IMR-90 (cell line): ENCODE measurements at regions of chr9 and their contacts with region 1.

Region 1: GRCh38 chr9:74645007-74645639 is 148.0 kb downstream of the RORB start:
- DNase-seq: no peak
- ATAC-seq: peak; percentile 53; the same call in 1 of the 2 replicates
- H3K4me3 ChIP-seq: no peak overlapping the region
- H3K27ac ChIP-seq: no peak overlapping the region
- H3K4me1 ChIP-seq: no peaks in the 10 kb centered on the region
- H3K27me3 ChIP-seq: no peaks in the 10 kb centered on the region
- CTCF ChIP-seq: peak; percentile 45
- POLR2A ChIP-seq: no peak
- RAD21 ChIP-seq: no peak

Region 2: DNA sequence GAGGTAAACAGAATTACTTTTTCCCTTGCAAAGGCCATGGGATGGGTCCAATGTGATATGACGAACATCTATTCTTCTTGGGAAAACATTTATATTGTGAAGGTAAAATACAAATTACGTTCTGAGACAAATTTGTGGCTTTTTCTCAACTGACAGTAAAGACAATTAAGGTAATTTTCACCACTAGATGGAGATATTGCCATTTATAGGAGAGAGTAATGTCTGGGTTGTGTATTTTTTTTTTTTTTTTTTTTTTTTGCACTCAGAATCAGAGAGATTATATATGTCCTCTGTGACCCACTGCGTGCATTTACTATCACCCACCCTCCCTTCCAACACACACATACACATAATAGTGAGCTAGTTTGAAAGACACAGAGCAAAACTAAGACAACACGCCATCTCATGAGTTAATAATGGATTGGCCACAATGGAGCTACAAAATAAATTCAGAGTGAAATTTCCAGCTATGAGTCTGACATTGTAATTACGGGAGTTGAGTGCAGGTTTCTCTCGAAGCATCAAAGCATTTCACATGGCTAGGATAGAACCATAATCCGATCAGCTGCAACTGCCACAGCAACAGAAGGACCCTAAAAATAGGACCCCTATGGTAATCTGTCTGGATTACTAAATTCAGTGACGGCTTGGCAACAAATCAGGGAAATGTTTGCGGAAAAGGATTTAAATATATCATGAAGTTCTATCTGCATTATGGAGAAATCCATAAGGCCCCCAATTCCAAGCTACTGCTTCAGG is 1444.2 kb before region 1 on chr9:
- CTCF ChIA-PET with region 1: no interaction called
- POLR2A ChIA-PET with region 1: no interaction called
- dilution Hi-C with region 1: no loop called
- in situ Hi-C with region 1: no loop called
- intact Hi-C with region 1: loop called (anchors 5 kb)
- DNase-seq: peak; percentile 23
- ATAC-seq: peak; percentile 29; the same call in 1 of the 2 replicates
- H3K4me3 ChIP-seq: no peak overlapping the region
- H3K27ac ChIP-seq: no peak overlapping the region
- H3K4me1 ChIP-seq: no peaks in the 10 kb centered on the region
- H3K27me3 ChIP-seq: no peaks in the 10 kb centered on the region
- CTCF ChIP-seq: peak; percentile 64
- POLR2A ChIP-seq: no peak
- RAD21 ChIP-seq: peak; percentile 63

Region 3: GRCh38 chr9:74595286-74595685 is 49.8 kb before region 1 on chr9:
- CTCF ChIA-PET with region 1: no interaction called
- POLR2A ChIA-PET with region 1: no interaction called
- dilution Hi-C with region 1: no loop called
- in situ Hi-C with region 1: no loop called
- intact Hi-C with region 1: loop called (anchors 5 kb)
- DNase-seq: no peak
- ATAC-seq: no peak
- H3K4me3 ChIP-seq: no peak overlapping the region
- H3K27ac ChIP-seq: no peak overlapping the region
- H3K4me1 ChIP-seq: no peaks in the 10 kb centered on the region
- H3K27me3 ChIP-seq: no peaks in the 10 kb centered on the region
- CTCF ChIP-seq: no peak
- POLR2A ChIP-seq: no peak
- RAD21 ChIP-seq: no peak

Region 4: DNA sequence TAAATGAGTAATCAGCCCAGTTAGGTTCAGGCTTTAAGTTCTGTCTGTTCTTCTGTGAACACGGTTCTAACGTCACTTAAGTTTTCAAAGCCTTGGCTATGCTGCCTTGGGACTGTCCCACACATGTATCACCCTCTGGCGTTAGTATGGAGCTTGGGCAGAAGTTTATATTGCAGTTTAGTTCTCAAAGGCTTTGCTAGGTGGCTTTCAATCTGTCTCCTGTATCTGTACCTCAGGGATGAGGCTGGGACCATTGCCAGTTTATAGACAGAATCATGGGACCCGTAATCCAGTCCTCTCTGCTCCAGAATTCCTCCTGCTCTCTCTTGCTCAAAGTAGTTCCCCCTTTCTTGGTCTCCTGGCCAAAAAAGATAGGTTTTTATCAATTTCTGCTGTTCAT is 295.5 kb after region 1 on chr9:
- CTCF ChIA-PET with region 1: no interaction called
- POLR2A ChIA-PET with region 1: no interaction called
- dilution Hi-C with region 1: no loop called
- in situ Hi-C with region 1: no loop called
- intact Hi-C with region 1: no loop called
- DNase-seq: peak; percentile 12
- ATAC-seq: no peak
- H3K4me3 ChIP-seq: no peak overlapping the region
- H3K27ac ChIP-seq: no peak overlapping the region
- H3K4me1 ChIP-seq: no peaks in the 10 kb centered on the region
- H3K27me3 ChIP-seq: no peaks in the 10 kb centered on the region
- CTCF ChIP-seq: no peak
- POLR2A ChIP-seq: no peak
- RAD21 ChIP-seq: no peak